Psoas muscle (tissue), 8 donors: ENCODE measurements at regions of chr11 and their contacts with region 1.

Region 1: DNA sequence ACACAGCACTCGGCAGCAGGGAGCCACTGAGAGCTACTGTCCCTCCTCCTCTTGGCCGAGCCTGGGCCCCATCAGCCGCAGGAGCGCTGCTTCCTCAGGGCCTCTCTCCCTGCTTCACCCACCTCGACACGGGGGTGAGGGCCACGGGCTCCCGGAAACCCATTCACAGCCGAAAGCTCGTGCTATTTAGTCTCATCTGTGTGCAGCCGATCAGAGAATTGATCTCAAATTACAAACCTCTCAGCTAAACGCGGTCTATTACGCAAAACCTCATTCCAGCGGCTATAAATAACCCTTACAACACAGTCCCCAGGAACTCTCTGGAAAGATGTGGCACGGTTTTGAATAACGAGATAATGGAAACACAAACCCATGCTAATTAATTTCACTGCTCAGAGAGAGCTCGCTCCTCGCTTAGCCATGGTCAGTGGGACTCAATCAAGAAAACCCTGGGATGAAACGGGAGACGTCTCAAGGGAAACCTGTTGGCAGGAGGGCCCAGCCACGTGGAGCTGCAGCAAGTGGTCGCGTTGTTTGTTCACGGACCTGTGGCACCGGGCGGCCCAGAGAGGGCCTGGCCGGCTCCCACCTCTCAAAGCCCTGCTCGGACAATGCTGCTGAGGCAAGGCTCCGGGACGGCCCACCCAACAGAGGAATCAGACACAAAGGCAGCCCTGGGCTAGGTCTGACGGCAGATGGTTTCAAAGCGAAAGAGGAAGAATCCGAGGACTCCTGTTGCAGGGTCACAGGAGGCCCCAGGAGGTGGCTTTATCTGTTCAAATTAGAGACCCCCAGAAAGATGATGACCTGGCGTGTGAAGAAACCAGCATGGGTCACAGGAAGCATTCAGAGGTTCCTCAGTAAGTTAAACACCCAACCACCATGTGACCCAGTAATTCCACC is 210.5 kb downstream of the CTTN start:
- DNase-seq: peak; percentile 8 to 59
- ATAC-seq: peak; percentile 80 to 92 (median 84)
- H3K4me3 ChIP-seq: peak overlapping the region; percentile 32
- H3K27ac ChIP-seq: peak overlapping the region; percentile 39
- H3K4me1 ChIP-seq: peaks cover 13% of the 10 kb centered on the region
- H3K27me3 ChIP-seq: no peaks in the 10 kb centered on the region
- CTCF ChIP-seq: no peak

Region 2: GRCh38 chr11:70483077-70483861 is 125.5 kb before region 1 on chr11:
- intact Hi-C with region 1: loop called in 1 of 2 experiments (anchors 5 kb)
- DNase-seq: no peak
- ATAC-seq: peak; percentile 48 to 68 (median 58)
- H3K4me3 ChIP-seq: peak overlapping the region; percentile 9
- H3K27ac ChIP-seq: peak overlapping the region; percentile 94
- H3K4me1 ChIP-seq: peaks cover 17% of the 10 kb centered on the region
- H3K27me3 ChIP-seq: no peaks in the 10 kb centered on the region
- CTCF ChIP-seq: peak; percentile 40

Region 3: DNA sequence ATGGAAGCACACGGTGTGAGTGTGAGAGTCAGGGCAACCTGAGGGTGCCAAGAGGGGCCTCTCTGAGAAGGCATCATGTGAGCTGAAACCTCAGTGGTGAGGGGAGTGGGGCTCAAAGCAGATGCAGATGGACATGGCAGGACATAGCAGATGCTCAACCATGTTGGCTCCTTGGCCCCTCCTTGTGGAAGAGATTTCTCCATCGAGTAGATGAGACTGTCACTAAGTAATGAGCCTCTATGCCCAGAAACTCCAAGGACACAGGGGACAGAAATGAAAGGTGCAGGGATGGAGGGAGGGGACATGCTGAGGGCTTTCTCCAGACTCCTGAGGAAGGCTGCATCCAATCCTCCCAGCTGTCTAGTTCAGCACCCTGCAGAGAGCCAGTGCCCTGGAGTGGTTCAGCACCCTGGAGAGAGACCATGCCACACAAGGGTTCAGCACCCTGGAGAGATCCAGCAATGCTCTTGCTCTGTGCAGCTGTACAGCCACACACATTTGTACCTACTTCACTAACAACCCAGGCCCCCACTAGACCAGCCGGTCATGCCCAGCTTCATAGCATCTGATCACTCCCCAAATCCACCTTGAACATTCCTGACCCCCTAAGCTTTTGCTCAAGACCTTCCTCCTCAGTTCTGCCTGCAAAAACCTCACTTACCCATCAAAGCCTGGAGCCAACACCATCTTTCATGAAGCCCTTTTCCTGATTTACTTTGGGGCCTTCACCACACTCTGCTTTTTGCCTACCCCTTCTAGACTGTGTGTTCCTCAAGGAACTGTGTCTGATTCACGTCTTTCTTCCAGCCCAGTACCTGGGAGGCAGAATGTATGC is 41.5 kb after region 1 on chr11:
- intact Hi-C with region 1: no loop called
- DNase-seq: peak in 1 of 2 donors; percentile 44
- ATAC-seq: peak; percentile 58 to 78 (median 70)
- H3K4me3 ChIP-seq: no peak overlapping the region
- H3K27ac ChIP-seq: no peak overlapping the region
- H3K4me1 ChIP-seq: no peaks in the 10 kb centered on the region
- H3K27me3 ChIP-seq: peaks cover 0 to 9% (median 0%) of the 10 kb centered on the region in 3 donors
- CTCF ChIP-seq: no peak

Region 4: DNA sequence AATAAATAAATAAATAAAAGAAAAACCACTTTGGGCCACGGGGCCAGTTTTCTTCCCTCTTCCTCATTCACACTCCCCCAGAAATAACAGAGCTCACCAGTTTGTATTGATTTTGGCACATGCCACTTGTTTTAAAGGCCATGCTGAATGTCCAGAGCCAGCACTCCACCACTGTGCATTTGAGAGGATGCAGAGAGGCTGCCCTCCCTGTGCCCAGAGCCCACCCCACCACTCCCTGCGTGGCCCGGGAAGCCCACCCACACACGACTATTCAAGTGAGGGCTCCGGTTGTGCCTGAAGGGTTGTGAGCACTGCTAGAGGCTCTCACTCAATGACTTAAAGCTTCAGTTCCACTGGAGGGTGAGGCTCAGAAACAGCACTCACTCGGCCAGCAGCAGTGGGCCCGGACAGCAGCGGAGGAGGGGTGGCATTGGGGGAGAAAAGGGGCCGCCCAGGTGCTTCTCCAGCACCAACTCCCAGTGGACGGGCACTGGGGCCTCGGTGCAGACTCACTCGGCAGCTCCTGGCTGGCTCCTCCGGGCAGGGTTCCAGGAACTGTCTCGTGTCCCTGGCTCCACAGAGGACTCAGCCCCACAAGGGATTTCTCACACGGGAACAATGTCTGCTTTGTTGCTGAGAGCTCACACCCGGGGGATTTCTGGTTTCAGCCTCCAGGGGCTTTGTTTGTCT is 530.8 kb after region 1 on chr11:
- intact Hi-C with region 1: no loop called
- DNase-seq: no peak
- ATAC-seq: peak in 1 of 4 donors; percentile 54
- H3K4me3 ChIP-seq: no peak overlapping the region
- H3K27ac ChIP-seq: no peak overlapping the region
- H3K4me1 ChIP-seq: no peaks in the 10 kb centered on the region
- H3K27me3 ChIP-seq: peaks cover 0 to 17% (median 5%) of the 10 kb centered on the region in 3 donors
- CTCF ChIP-seq: no peak